ENCODE measurements at regions of chr16 and their contacts with region 1.

Region 1: DNA sequence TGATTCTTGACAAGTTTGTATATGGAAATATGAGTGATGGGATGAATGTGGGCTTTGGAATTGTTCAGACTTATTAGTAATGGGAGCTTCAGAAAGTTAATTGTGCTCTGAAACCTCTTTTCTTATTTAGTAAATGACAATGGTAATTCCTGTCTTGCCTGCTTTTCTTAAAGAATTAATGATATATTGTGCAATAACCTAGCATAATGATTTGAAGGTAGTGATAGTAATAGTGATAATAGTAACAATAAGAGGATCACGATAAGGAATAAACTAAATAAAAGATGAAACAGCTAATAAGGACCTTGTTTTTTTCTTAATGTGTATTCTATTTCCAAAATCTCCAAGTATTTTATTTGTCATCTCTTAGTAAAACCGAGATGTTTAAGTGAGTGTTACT is 245.0 kb upstream of the CPHXL start:
- DNase-seq: no peak
- H3K4me3 Mint-ChIP-seq: no peak overlapping the region
- H3K27ac Mint-ChIP-seq: no peak overlapping the region
- H3K4me1 Mint-ChIP-seq: no peaks in the 10 kb centered on the region
- H3K27me3 Mint-ChIP-seq: peaks cover 11% of the 10 kb centered on the region
- CTCF ChIP-seq: no peak

Region 2: GRCh38 chr16:76035689-76036088 is 64.4 kb after region 1 on chr16:
- CTCF ChIA-PET with region 1: no interaction called
- intact Hi-C with region 1: loop called (anchors 10 kb)
- DNase-seq: no peak
- H3K4me3 Mint-ChIP-seq: no peak overlapping the region
- H3K27ac Mint-ChIP-seq: no peak overlapping the region
- H3K4me1 Mint-ChIP-seq: no peaks in the 10 kb centered on the region
- H3K27me3 Mint-ChIP-seq: no peaks in the 10 kb centered on the region
- CTCF ChIP-seq: no peak

Measured in Calu3 (cell line).